ENCODE measurements at regions of chr20 and their contacts with region 1.

Region 1: GRCh38 chr20:32779500-32780211 is 17.5 kb downstream of the DNMT3B start:
- DNase-seq: no peak
- H3K4me3 Mint-ChIP-seq: no peak overlapping the region
- H3K27ac Mint-ChIP-seq: no peak overlapping the region
- H3K4me1 Mint-ChIP-seq: peaks cover 9% of the 10 kb centered on the region
- H3K27me3 Mint-ChIP-seq: no peaks in the 10 kb centered on the region

Region 2: DNA sequence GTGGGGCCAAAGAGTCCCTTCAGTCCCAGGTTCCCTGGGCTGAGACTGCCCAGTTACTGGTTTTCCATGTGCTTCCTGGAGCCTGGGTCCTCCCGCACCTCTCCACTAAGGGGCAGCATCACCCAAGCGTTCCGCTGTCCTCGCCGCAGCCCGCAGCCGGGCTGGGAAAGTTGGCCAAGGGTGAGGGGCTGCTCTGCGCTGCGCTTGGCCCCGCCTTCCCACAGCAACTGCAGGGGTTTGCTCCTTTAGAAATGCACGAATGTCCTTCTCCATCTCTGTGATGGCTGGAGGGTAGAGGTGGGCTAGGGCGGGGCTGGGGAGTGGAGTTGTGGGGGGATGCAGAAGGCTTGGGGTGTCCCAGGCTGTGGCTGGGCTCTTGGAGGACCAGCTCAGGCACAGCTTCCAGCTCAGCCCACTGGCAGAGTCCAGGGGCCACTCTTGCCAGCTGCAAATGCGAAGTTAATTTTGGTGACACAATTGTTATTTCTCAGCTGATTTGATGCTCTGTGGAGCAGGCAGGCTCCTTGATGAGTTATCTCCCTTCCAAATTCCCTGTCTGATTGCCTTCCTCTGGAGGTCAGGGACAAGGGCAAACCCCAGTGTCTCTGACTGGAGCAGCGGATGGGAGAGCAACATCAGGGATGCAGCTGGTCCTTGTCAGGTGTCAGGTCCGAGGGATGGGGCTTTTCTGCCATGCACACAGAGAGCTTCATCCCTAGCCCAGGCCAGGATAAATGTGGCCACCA is 257.7 kb before region 1 on chr20:
- CTCF ChIA-PET with region 1: interaction called, 11 read pairs
- POLR2A ChIA-PET with region 1: no interaction called
- DNase-seq: peak; percentile 68
- H3K4me3 Mint-ChIP-seq: no peak overlapping the region
- H3K27ac Mint-ChIP-seq: peak overlapping the region; percentile 46
- H3K4me1 Mint-ChIP-seq: peaks cover 55% of the 10 kb centered on the region
- H3K27me3 Mint-ChIP-seq: no peaks in the 10 kb centered on the region

Region 3: GRCh38 chr20:32674362-32674789 is 105.3 kb before region 1 on chr20:
- CTCF ChIA-PET with region 1: interaction called, 87 read pairs
- POLR2A ChIA-PET with region 1: no interaction called
- DNase-seq: peak; percentile 82
- H3K4me3 Mint-ChIP-seq: no peak overlapping the region
- H3K27ac Mint-ChIP-seq: peak overlapping the region; percentile 39
- H3K4me1 Mint-ChIP-seq: peaks cover 38% of the 10 kb centered on the region
- H3K27me3 Mint-ChIP-seq: no peaks in the 10 kb centered on the region

Region 4: GRCh38 chr20:32697608-32698007 is 82.0 kb before region 1 on chr20:
- CTCF ChIA-PET with region 1: interaction called, 12 read pairs
- POLR2A ChIA-PET with region 1: no interaction called
- DNase-seq: no peak
- H3K4me3 Mint-ChIP-seq: no peak overlapping the region
- H3K27ac Mint-ChIP-seq: no peak overlapping the region
- H3K4me1 Mint-ChIP-seq: no peaks in the 10 kb centered on the region
- H3K27me3 Mint-ChIP-seq: no peaks in the 10 kb centered on the region

Region 5: DNA sequence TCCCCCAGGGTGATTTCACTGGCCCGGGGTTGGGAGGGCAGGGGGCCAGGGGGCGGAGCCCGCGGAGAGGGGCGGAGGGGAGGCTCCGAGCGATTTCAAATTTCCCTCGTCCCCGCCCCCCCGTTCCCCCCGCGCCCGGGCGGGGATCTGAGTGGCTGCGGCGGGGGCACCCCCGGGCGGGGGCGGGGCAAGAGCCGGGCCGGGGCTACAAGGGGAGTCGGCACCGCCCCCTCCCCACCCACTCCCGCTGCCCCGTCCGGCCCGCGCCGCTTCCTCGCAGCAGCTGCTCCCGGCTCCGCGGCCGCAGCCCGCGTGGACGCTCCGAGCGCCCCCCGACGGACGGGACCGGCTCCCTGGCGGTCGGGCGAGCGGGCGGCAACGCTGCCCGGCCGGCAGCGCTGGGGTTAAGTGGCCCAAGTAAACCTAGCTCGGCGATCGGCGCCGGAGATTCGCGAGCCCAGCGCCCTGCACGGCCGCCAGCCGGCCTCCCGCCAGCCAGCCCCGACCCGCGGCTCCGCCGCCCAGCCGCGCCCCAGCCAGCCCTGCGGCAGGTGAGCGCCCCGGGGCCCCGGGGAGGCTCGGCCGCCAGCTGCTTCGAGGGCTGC is 17.4 kb before region 1 on chr20 and contains the start of gene DNMT3B:
- CTCF ChIA-PET with region 1: interaction called, 24 read pairs
- POLR2A ChIA-PET with region 1: no interaction called
- DNase-seq: peak; percentile 74
- H3K4me3 Mint-ChIP-seq: peak within 1 kb of the TSS; percentile 80
- H3K27ac Mint-ChIP-seq: peak within 1 kb of the TSS; percentile 79
- H3K4me1 Mint-ChIP-seq: peaks cover 19% of the 10 kb centered on the region
- H3K27me3 Mint-ChIP-seq: peaks cover 10% of the 10 kb centered on the region
- total RNA-seq, gene DNMT3B: 3.7 to 4.1 TPM

Region 6: GRCh38 chr20:32789896-32790750 is 10.5 kb after region 1 on chr20:
- CTCF ChIA-PET with region 1: interaction called, 14 read pairs
- POLR2A ChIA-PET with region 1: no interaction called
- DNase-seq: peak; percentile 80
- H3K4me3 Mint-ChIP-seq: no peak overlapping the region
- H3K27ac Mint-ChIP-seq: no peak overlapping the region
- H3K4me1 Mint-ChIP-seq: peaks cover 28% of the 10 kb centered on the region
- H3K27me3 Mint-ChIP-seq: no peaks in the 10 kb centered on the region

Region 7: DNA sequence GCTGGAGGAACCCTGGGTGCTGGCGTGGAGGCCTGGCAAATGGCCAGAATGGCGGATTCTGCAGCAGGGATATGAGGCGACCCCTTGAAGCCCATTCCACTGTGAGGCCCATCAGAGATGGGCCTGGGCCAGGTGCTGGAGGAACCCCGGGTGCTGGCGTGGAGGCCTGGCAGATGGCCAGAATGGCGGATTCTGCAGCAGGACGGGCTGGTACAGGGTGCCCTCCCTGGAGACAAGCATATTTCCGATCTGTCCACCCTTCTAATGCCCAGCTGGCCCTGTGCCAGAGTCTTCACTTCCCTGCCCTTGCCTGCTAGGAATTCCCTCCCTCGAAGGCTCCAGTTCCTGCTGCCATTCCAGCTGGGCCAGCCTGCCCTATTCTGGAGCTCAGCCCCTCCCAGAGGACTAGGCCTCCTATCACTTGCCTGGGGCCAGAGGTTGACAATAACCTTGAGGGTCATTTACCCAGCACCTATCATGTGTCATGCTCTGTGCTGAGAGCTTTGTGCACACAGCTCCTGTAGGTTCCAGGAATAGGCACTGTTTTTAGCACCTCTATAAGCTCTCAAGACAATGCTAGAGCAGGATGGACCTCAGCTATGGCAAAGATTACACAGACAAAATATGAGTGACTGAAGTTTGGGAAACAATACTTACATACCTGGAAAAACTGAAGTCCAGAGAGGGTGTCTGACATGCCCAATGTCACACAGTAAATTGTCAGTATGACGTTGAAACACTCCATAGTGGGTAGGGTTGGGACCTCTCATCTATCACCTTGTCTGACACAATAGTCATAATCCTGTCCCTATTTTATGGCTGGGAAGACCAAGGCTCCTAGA is 203.2 kb after region 1 on chr20:
- CTCF ChIA-PET with region 1: no interaction called
- POLR2A ChIA-PET with region 1: no interaction called
- DNase-seq: no peak
- H3K4me3 Mint-ChIP-seq: no peak overlapping the region
- H3K27ac Mint-ChIP-seq: no peak overlapping the region
- H3K4me1 Mint-ChIP-seq: no peaks in the 10 kb centered on the region
- H3K27me3 Mint-ChIP-seq: no peaks in the 10 kb centered on the region